ENCODE measurements at regions of chr1 and their contacts with region 1.

Region 1: GRCh38 chr1:23184212-23184934 is 15.7 kb upstream of the LUZP1 start:
- DNase-seq: peak; percentile 28 to 66 (median 45)
- ATAC-seq: peak; percentile 47
- H3K4me3 ChIP-seq: no peak overlapping the region
- H3K4me3 Mint-ChIP-seq: peak overlapping the region in 9 of 10 donors; percentile 55 to 81 (median 77)
- H3K27ac ChIP-seq: no peak overlapping the region
- H3K27ac Mint-ChIP-seq: peak overlapping the region in 2 of 9 donors; percentile 31 to 60
- H3K4me1 ChIP-seq: peaks cover 0 to 7% of the 10 kb centered on the region in 2 donors
- H3K4me1 Mint-ChIP-seq: peaks cover 0 to 8% (median 4%) of the 10 kb centered on the region in 7 donors
- H3K27me3 ChIP-seq: no peaks in the 10 kb centered on the region
- H3K27me3 Mint-ChIP-seq: peaks cover 0 to 11% (median 0%) of the 10 kb centered on the region in 5 donors

Region 2: DNA sequence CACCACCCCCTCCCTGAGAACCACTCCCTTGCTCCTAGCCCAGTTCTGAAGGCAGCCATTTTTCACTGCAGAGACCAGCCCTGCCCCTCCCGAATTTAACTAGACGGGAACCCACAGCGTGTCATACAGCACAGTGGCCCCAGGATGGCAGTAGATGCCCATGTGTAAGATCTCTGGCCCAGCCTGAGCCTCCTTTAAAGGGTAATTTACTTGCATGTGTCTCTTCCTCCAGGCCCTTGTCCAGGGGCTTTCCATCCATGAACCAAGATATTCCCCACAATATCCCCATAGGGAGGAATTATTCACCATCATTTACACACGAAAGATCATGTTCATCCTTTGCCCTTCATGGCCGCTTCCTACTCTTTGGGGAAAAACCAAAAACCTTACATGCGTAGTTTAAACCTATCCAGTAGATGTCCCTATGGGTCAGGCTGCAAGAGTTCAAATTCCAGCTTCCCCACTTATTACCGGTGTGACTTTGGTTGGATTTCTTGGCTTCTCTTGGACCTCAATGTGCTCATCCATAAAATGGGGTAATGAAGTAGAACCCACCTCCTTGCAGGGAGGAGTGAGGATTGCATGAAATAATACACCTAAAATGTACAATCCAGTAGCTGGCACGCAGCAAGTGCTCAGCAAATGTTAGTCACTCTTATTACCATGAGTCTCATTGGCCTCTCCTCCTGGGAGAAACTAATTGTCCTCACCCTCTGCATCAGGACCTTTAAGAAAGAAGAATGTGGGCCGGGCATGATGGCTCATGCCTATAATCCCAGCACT is 207.7 kb before region 1 on chr1:
- CTCF ChIA-PET with region 1: no interaction called
- POLR2A ChIA-PET with region 1: no interaction called
- intact Hi-C with region 1: loop called in 1 of 2 experiments (anchors 1 kb)
- DNase-seq: peak in 8 of 9 donors; percentile 11 to 46 (median 38)
- ATAC-seq: peak; percentile 95
- H3K4me3 ChIP-seq: no peak overlapping the region
- H3K4me3 Mint-ChIP-seq: no peak overlapping the region
- H3K27ac ChIP-seq: no peak overlapping the region
- H3K27ac Mint-ChIP-seq: peak overlapping the region in 1 of 9 donors; percentile 72
- H3K4me1 ChIP-seq: no peaks in the 10 kb centered on the region
- H3K4me1 Mint-ChIP-seq: peaks cover 0 to 3% (median 0%) of the 10 kb centered on the region in 7 donors
- H3K27me3 ChIP-seq: no peaks in the 10 kb centered on the region
- H3K27me3 Mint-ChIP-seq: peaks cover 20 to 39% (median 22%) of the 10 kb centered on the region in 5 donors

Region 3: GRCh38 chr1:23118957-23119792 is 65.2 kb before region 1 on chr1:
- CTCF ChIA-PET with region 1: interaction called, 27 read pairs
- POLR2A ChIA-PET with region 1: no interaction called
- intact Hi-C with region 1: no loop called
- DNase-seq: peak in 6 of 9 donors; percentile 8 to 49 (median 33)
- ATAC-seq: peak; percentile 89
- H3K4me3 ChIP-seq: peak overlapping the region; percentile 7
- H3K4me3 Mint-ChIP-seq: peak overlapping the region; percentile 40 to 81 (median 69)
- H3K27ac ChIP-seq: peak overlapping the region; percentile 36
- H3K27ac Mint-ChIP-seq: peak overlapping the region; percentile 23 to 89 (median 81)
- H3K4me1 ChIP-seq: peaks cover 22 to 30% of the 10 kb centered on the region in 2 donors
- H3K4me1 Mint-ChIP-seq: peaks cover 38 to 79% (median 60%) of the 10 kb centered on the region in 7 donors
- H3K27me3 ChIP-seq: no peaks in the 10 kb centered on the region
- H3K27me3 Mint-ChIP-seq: no peaks in the 10 kb centered on the region

Region 4: GRCh38 chr1:23196639-23197328 is 12.4 kb after region 1 on chr1:
- CTCF ChIA-PET with region 1: interaction called, 19 read pairs
- POLR2A ChIA-PET with region 1: no interaction called
- intact Hi-C with region 1: no loop called
- DNase-seq: no peak
- ATAC-seq: no peak
- H3K4me3 ChIP-seq: no peak overlapping the region
- H3K4me3 Mint-ChIP-seq: no peak overlapping the region
- H3K27ac ChIP-seq: no peak overlapping the region
- H3K27ac Mint-ChIP-seq: no peak overlapping the region
- H3K4me1 ChIP-seq: no peaks in the 10 kb centered on the region
- H3K4me1 Mint-ChIP-seq: no peaks in the 10 kb centered on the region
- H3K27me3 ChIP-seq: no peaks in the 10 kb centered on the region
- H3K27me3 Mint-ChIP-seq: peaks cover 3 to 21% (median 11%) of the 10 kb centered on the region in 5 donors

Measured in naive thymus-derived CD4-positive, alpha-beta T cell (primary cell).